ENCODE measurements at regions of chr10 and their contacts with region 1.

Region 1: DNA sequence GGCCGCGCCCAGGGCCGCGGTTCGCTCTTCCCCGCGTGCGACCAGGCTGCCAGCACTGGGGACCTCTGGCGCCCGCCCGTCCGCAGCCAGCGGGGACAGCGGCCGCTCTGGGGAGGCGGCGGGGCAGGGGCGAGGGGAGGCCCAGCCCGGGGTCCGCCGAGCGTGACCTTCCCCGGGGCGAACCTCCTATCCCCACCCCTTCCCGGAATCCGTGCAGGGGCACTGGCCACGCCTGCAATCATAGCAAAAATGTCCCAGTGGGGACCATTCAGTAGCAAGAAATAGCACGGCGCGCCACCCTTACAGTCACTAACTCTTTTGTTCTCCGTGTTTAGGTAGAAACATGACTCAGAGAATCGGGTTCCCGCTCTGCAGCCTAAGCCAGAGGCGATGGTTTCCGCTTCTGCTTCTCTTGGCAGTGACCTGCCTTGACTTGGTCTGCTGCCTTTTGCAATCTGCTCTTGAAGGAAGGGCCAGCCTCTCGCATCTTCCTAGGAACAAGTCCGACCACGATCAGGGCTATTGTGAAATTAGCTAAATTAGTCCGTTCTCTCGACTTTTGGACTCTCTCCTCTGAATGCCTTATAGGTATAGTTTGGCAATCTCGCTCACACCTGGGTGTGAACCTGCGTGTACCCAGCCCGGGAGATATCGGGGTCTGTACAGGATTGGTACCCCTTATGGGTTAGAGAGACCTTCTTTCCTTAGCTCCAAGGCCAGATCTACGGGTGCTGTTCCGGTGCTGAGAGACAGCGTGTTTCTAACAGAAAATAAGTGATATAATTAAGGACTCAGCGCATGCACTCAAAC is 79.4 kb upstream of the ACBD5 start:
- DNase-seq: peak; percentile 72
- ATAC-seq: peak; percentile 81
- H3K4me3 Mint-ChIP-seq: peak overlapping the region; percentile 43
- H3K27ac Mint-ChIP-seq: no peak overlapping the region
- H3K4me1 Mint-ChIP-seq: peaks cover 10% of the 10 kb centered on the region
- H3K27me3 Mint-ChIP-seq: peaks cover 20% of the 10 kb centered on the region

Region 2: GRCh38 chr10:26627324-26627723 is 692.6 kb before region 1 on chr10:
- CTCF ChIA-PET with region 1: no interaction called
- POLR2A ChIA-PET with region 1: no interaction called
- intact Hi-C with region 1: loop called (anchors 2 to 5 kb)
- DNase-seq: no peak
- ATAC-seq: no peak
- H3K4me3 Mint-ChIP-seq: no peak overlapping the region
- H3K27ac Mint-ChIP-seq: no peak overlapping the region
- H3K4me1 Mint-ChIP-seq: peaks cover 13% of the 10 kb centered on the region
- H3K27me3 Mint-ChIP-seq: peaks cover 16% of the 10 kb centered on the region

Region 3: GRCh38 chr10:26640391-26640790 is 679.6 kb before region 1 on chr10:
- CTCF ChIA-PET with region 1: no interaction called
- POLR2A ChIA-PET with region 1: no interaction called
- intact Hi-C with region 1: loop called in 1 of 2 experiments (anchors 2 kb)
- DNase-seq: no peak
- ATAC-seq: no peak
- H3K4me3 Mint-ChIP-seq: no peak overlapping the region
- H3K27ac Mint-ChIP-seq: no peak overlapping the region
- H3K4me1 Mint-ChIP-seq: peaks cover 4% of the 10 kb centered on the region
- H3K27me3 Mint-ChIP-seq: peaks cover 2% of the 10 kb centered on the region

Region 4: DNA sequence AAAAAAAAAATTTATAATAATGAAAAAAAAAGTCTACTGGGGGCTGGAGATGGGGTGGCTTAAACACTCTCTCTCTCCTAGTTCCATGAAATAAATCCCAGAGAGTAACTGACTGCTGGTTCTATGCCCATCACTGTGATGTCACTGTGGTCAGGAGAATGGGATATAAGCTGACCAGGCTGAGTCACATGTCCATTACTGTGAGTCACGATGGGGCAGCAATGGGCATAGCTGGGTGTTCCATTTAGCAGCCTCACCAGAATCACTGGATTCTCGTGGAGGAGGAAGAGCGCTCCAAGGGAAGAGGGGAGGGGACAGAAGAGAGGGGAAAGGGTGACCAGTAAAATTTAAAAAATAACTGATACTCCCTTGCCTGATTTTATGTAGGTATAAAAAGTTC is 127.7 kb before region 1 on chr10:
- CTCF ChIA-PET with region 1: no interaction called
- POLR2A ChIA-PET with region 1: no interaction called
- intact Hi-C with region 1: no loop called
- DNase-seq: no peak
- ATAC-seq: no peak
- H3K4me3 Mint-ChIP-seq: no peak overlapping the region
- H3K27ac Mint-ChIP-seq: no peak overlapping the region
- H3K4me1 Mint-ChIP-seq: no peaks in the 10 kb centered on the region
- H3K27me3 Mint-ChIP-seq: no peaks in the 10 kb centered on the region

Region 5: GRCh38 chr10:27345455-27345920 is 25.5 kb after region 1 on chr10:
- CTCF ChIA-PET with region 1: interaction called, 5 read pairs
- POLR2A ChIA-PET with region 1: no interaction called
- intact Hi-C with region 1: loop called (anchors 2 kb)
- DNase-seq: no peak
- ATAC-seq: peak; percentile 41
- H3K4me3 Mint-ChIP-seq: peak overlapping the region; percentile 18
- H3K27ac Mint-ChIP-seq: peak overlapping the region; percentile 90
- H3K4me1 Mint-ChIP-seq: peaks cover 29% of the 10 kb centered on the region
- H3K27me3 Mint-ChIP-seq: peaks cover 16% of the 10 kb centered on the region

Measured in activated CD4-positive, alpha-beta T cell treated with anti-CD3 and anti-CD28 coated beads for 36 hours (primary cell).